OCI-LY7 (cell line): ENCODE measurements at regions of chr5 and their contacts with region 1.

Region 1: GRCh38 chr5:174084691-174085154 is 39.2 kb downstream of the NSG2 start:
- DNase-seq: peak; percentile 84
- H3K4me3 ChIP-seq: peak overlapping the region; percentile 52
- H3K27ac ChIP-seq: peak overlapping the region; percentile 74
- H3K4me1 ChIP-seq: peaks cover 31% of the 10 kb centered on the region
- CTCF ChIP-seq: no peak

Region 2: DNA sequence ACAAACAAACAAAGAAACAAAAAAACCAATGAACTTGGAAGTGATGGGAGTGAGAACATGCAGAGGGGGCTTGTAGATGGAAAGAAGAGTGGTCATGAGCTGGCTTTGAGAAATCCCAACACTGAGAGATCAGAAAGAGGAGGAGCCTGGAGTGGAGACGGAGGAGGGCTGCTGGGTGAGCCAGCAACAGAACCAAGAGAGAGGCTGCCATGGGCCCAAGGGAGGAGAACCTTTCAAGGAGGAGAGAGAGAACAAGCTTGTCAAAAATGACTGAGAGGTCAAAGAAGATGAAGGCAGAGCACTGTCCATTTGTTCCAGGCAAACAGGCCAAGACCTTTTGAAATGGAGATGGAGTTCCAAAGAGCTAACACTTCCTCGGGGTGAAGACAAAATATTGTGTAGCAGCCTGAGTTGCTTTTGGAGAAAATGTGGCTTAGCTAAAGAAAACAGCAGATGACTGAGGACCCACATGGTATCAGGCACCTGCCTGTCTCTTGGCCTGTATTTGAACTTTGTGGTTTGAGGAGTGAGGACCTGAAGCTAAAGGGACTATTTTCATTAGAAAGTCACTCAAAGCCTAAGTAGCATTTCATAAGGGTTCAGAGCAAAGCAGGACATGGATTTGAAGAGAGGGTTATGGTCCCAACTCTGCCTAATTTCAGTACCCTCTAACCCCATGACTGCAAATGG is 26.1 kb before region 1 on chr5:
- CTCF ChIA-PET with region 1: no interaction called
- POLR2A ChIA-PET with region 1: no interaction called
- intact Hi-C with region 1: no loop called
- DNase-seq: no peak
- H3K4me3 ChIP-seq: no peak overlapping the region
- H3K27ac ChIP-seq: no peak overlapping the region
- H3K4me1 ChIP-seq: no peaks in the 10 kb centered on the region
- CTCF ChIP-seq: no peak

Region 3: GRCh38 chr5:174097518-174098185 is 12.9 kb after region 1 on chr5:
- CTCF ChIA-PET with region 1: interaction called, 3 read pairs
- POLR2A ChIA-PET with region 1: interaction called, 9 read pairs
- intact Hi-C with region 1: loop called (anchors 1 kb)
- DNase-seq: no peak
- H3K4me3 ChIP-seq: peak overlapping the region; percentile 20
- H3K27ac ChIP-seq: peak overlapping the region; percentile 73
- H3K4me1 ChIP-seq: peaks cover 76% of the 10 kb centered on the region
- CTCF ChIP-seq: no peak

Region 4: DNA sequence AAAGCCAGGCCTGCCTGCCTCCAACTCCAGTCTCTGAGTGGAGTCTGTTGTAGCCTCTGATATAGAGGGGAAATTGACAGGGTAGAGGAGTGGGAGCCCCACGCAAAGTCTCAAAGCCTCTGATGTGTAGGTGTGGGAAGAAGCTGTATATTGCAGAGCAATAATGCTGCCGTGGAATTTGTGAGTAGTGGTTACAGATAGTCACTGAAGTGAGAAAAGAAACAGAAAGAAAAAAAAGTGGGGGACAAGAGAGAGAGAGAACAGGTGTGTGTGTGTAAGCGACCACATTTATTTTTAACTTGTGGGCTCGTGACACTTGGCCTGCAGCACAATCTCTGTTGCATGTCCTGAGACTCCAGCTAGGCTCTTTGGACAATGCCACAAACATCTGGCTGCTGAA is 188.6 kb after region 1 on chr5:
- CTCF ChIA-PET with region 1: no interaction called
- POLR2A ChIA-PET with region 1: no interaction called
- intact Hi-C with region 1: loop called (anchors 1 kb)
- DNase-seq: no peak
- H3K4me3 ChIP-seq: no peak overlapping the region
- H3K27ac ChIP-seq: no peak overlapping the region
- H3K4me1 ChIP-seq: no peaks in the 10 kb centered on the region
- CTCF ChIP-seq: no peak